ENCODE measurements at regions of chr7 and their contacts with region 1.

Region 1: GRCh38 chr7:129009437-129009836 is 45.5 kb downstream of the TNPO3 start:
- DNase-seq: peak; percentile 70
- ATAC-seq: peak; percentile 90
- H3K4me3 ChIP-seq: no peak overlapping the region
- H3K27ac ChIP-seq: peak overlapping the region; percentile 93
- H3K4me1 ChIP-seq: peaks cover 70% of the 10 kb centered on the region
- H3K27me3 ChIP-seq: no peaks in the 10 kb centered on the region
- CTCF ChIP-seq: no peak
- EP300 ChIP-seq: peak; percentile 66 to 90
- POLR2A ChIP-seq: no peak
- RAD21 ChIP-seq: no peak

Region 2: DNA sequence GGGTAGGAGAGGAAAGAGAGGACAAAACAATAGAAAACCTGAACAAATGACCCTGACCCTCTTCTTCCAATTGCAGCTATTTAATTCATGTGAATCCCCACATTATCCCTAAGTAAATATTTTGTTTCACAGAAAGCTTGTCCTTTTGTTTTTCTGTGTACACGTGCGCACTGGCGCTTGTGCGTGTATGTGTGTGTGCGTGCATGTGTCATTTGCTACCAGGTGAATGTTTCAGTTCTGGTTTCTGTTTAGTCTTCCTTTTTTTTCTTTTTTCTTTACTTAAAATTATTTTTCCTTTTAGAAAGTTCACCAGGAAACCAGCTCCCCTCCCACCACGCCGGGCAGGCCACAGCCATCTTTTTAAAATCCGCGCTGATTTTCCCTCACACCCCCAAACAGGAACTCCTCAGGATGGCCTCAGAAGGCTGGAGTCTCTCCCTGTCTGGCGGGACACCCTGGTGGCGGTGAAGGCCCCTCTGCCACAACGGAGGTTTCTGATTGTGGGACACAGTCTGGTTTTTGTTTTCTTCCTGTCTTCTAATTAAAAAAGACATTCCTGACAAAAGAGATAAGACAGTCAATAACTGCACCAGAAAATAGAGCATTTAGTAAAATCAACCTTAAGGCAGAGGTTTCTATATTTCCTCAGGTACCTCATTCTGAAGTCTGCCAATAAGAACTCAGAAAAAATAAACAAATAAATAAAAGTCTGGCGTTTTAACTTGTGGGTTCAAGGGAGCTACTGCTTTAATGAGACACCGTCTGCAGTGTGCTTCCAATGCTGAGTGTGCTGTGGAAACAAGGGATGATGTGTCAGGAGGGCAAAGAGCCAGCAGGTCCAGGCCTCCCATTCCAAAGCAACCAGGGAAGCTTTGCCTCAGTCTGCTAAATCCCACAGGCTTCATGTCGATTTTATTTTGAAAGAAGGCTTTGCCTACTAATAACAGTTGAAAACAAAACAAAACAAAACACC is 54.3 kb before region 1 on chr7:
- CTCF ChIA-PET with region 1: interaction called, 4 read pairs
- POLR2A ChIA-PET with region 1: no interaction called
- RAD21 ChIA-PET with region 1: interaction called, 5 read pairs
- SMC1A ChIA-PET with region 1: interaction called, 10 read pairs
- in situ Hi-C with region 1: no loop called
- intact Hi-C with region 1: no loop called
- DNase-seq: no peak
- ATAC-seq: peak; percentile 87
- H3K4me3 ChIP-seq: peak overlapping the region; percentile 46; the same call in 1 of the 2 replicates
- H3K27ac ChIP-seq: peak overlapping the region; percentile 65
- H3K4me1 ChIP-seq: peaks cover 18% of the 10 kb centered on the region
- H3K27me3 ChIP-seq: no peaks in the 10 kb centered on the region
- CTCF ChIP-seq: no peak
- EP300 ChIP-seq: peak; percentile 74 to 79; a peak in 2 of 4 replicates
- POLR2A ChIP-seq: no peak
- RAD21 ChIP-seq: no peak

Region 3: DNA sequence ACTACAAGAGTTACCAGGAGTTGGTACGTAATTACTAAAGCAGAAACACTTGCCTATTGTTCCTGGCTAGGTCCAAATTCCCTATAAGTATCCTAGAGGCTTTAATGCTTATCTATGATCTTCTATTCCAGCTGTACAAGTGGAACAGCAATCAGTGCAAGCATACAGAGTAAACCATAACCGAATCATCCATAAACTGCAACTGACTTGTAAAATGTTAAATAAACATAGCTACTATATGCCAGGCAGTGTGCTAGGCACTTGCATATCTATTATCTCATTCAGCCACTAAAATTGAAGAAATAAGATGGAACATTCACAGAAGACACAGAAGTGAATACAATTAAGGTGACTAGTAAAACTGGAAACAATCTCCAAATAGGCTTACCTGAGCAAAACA is 16.0 kb before region 1 on chr7:
- CTCF ChIA-PET with region 1: interaction called, 5 read pairs
- POLR2A ChIA-PET with region 1: interaction called, 3 read pairs
- RAD21 ChIA-PET with region 1: interaction called, 7 read pairs
- SMC1A ChIA-PET with region 1: interaction called, 11 read pairs
- in situ Hi-C with region 1: no loop called
- intact Hi-C with region 1: no loop called
- DNase-seq: no peak
- ATAC-seq: no peak
- H3K4me3 ChIP-seq: no peak overlapping the region
- H3K27ac ChIP-seq: no peak overlapping the region
- H3K4me1 ChIP-seq: no peaks in the 10 kb centered on the region
- H3K27me3 ChIP-seq: no peaks in the 10 kb centered on the region
- CTCF ChIP-seq: no peak
- EP300 ChIP-seq: no peak
- POLR2A ChIP-seq: no peak
- RAD21 ChIP-seq: no peak

Region 4: GRCh38 chr7:129054438-129055293 is 45.2 kb after region 1 on chr7 and contains the start of gene TNPO3:
- CTCF ChIA-PET with region 1: interaction called, 7 read pairs
- POLR2A ChIA-PET with region 1: interaction called, 11 read pairs
- RAD21 ChIA-PET with region 1: interaction called, 26 read pairs
- SMC1A ChIA-PET with region 1: interaction called, 71 read pairs
- in situ Hi-C with region 1: no loop called
- intact Hi-C with region 1: loop called (anchors 2 kb)
- DNase-seq: peak; percentile 78
- ATAC-seq: peak; percentile 88
- H3K4me3 ChIP-seq: peak within 1 kb of the TSS; percentile 97
- H3K27ac ChIP-seq: peak within 1 kb of the TSS; percentile 93
- H3K4me1 ChIP-seq: peaks cover 5% of the 10 kb centered on the region
- H3K27me3 ChIP-seq: no peaks in the 10 kb centered on the region
- CTCF ChIP-seq: no peak
- EP300 ChIP-seq: no peak
- POLR2A ChIP-seq: peak; percentile 97
- RAD21 ChIP-seq: 0 out of 2 replicates have a peak, but pooled peaks have one; percentile 7
- polyA plus RNA-seq, gene TNPO3: 17.6 to 23.5 TPM

Region 5: DNA sequence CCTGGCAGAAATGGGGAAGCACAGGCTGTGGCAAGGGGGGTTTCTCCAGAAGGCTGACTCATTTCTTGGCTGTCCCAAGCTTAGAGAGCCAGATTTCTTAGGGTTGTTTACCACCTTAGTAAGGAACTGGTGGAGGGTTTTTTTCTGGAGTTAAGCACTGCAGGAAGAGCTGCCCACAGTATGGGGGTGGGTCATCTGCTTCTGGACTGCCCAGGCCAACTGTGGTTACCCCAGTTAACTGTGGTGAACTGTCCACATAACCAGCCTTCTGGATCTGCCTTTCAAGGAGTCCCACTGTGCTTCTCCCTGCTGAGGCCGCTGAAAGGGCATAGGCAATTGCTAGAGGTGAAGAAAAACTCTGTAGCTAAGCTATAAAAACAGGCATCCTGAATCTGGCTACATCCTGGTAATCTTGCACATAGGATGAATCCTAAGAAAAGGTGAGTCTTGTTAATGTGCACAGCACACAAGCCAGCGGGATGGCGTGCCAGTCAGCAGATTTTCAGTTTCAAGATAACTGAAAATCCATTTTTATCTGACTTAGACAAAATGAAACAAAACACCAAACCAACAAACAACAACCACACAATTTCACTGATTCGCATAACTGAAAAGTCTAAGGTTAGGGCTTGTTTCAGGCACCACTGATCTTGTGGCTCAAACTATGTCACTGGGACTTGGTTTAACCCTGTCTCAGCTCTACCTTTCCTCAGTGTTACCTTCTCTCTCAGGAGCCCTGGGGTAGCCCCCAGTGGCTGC is 113.5 kb after region 1 on chr7:
- CTCF ChIA-PET with region 1: no interaction called
- POLR2A ChIA-PET with region 1: interaction called, 12 read pairs
- RAD21 ChIA-PET with region 1: interaction called, 6 read pairs
- SMC1A ChIA-PET with region 1: interaction called, 5 read pairs
- in situ Hi-C with region 1: no loop called
- intact Hi-C with region 1: no loop called
- DNase-seq: peak; percentile 95
- ATAC-seq: peak; percentile 91
- H3K4me3 ChIP-seq: peak overlapping the region; percentile 43
- H3K27ac ChIP-seq: peak overlapping the region; percentile 96
- H3K4me1 ChIP-seq: peaks cover 36% of the 10 kb centered on the region
- H3K27me3 ChIP-seq: no peaks in the 10 kb centered on the region
- CTCF ChIP-seq: no peak
- EP300 ChIP-seq: peak; percentile 98
- POLR2A ChIP-seq: no peak
- RAD21 ChIP-seq: no peak